Ascending aorta (tissue), 2 donors: ENCODE measurements at regions of chr10 and their contacts with region 1.

Region 1: DNA sequence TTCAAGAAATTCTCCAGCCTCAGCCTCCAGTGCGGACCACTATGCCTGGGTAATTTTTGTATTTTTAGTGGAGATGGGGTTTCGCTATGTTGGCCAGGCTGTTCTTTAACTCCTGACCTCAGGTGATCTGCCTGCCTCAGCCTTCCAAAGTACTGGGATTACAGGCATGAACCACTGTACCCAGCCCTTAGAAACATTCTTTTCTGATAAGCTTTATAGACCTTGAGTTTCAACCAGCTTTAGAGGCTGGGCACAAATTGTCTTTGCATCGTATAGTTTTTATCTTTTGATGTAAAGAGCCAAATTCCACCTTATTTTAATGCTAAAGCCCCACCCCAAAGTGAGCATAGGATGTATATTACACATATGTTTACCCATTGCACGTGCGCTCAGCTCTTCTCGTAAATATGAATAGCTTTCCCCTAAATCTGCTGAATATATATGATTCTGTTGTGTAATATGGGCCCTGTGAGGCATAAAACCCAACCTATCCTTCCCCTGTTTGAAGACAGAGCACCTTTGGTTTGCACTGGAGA is 124.8 kb downstream of the ADK start:
- DNase-seq: no peak
- H3K4me3 ChIP-seq: no peak overlapping the region
- H3K27ac ChIP-seq: peak overlapping the region; percentile 5 to 37
- H3K4me1 ChIP-seq: peaks cover 0 to 4% of the 10 kb centered on the region in 2 donors
- H3K27me3 ChIP-seq: no peaks in the 10 kb centered on the region
- CTCF ChIP-seq: no peak

Region 2: GRCh38 chr10:74213571-74214162 is 62.2 kb before region 1 on chr10:
- intact Hi-C with region 1: no loop called
- DNase-seq: no peak
- H3K4me3 ChIP-seq: no peak overlapping the region
- H3K27ac ChIP-seq: no peak overlapping the region
- H3K4me1 ChIP-seq: no peaks in the 10 kb centered on the region
- H3K27me3 ChIP-seq: no peaks in the 10 kb centered on the region
- CTCF ChIP-seq: peak in 2 of 3 experiments; percentile 17 to 47

Region 3: DNA sequence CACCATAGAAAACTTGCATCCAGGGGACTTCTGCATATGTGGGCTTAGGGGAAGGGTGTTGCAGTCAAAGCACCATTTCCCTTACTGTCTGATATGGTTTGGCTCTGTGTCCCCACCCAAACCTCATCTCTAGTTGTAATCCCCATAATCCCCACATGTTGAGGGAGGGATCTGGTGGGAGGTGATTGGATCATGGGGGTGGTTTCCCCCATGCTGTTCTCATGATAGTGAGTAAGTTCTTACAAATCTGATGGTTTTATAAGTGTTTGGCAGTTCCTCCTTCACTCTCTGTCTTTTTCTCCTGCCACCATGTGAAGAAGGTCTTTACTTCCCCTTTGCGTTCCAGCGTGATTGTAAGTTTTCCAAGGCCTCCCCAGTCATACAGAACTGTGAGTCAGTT is 52.6 kb after region 1 on chr10:
- intact Hi-C with region 1: loop called (anchors 10 kb)
- DNase-seq: no peak
- H3K4me3 ChIP-seq: no peak overlapping the region
- H3K27ac ChIP-seq: no peak overlapping the region
- H3K4me1 ChIP-seq: no peaks in the 10 kb centered on the region
- H3K27me3 ChIP-seq: no peaks in the 10 kb centered on the region
- CTCF ChIP-seq: no peak